Gastrocnemius medialis (tissue), 4 donors: ENCODE measurements at regions of chr4 and their contacts with region 1.

Region 1: GRCh38 chr4:71553605-71554004 is 214.8 kb downstream of the SLC4A4 start:
- DNase-seq: no peak
- ATAC-seq: peak; percentile 82
- H3K4me3 ChIP-seq: no peak overlapping the region
- H3K27ac ChIP-seq: no peak overlapping the region
- H3K4me1 ChIP-seq: no peaks in the 10 kb centered on the region
- H3K27me3 ChIP-seq: no peaks in the 10 kb centered on the region
- CTCF ChIP-seq: peak in 4 of 5 experiments; percentile 42 to 54 (median 52)
- POLR2A ChIP-seq: no peak

Region 2: DNA sequence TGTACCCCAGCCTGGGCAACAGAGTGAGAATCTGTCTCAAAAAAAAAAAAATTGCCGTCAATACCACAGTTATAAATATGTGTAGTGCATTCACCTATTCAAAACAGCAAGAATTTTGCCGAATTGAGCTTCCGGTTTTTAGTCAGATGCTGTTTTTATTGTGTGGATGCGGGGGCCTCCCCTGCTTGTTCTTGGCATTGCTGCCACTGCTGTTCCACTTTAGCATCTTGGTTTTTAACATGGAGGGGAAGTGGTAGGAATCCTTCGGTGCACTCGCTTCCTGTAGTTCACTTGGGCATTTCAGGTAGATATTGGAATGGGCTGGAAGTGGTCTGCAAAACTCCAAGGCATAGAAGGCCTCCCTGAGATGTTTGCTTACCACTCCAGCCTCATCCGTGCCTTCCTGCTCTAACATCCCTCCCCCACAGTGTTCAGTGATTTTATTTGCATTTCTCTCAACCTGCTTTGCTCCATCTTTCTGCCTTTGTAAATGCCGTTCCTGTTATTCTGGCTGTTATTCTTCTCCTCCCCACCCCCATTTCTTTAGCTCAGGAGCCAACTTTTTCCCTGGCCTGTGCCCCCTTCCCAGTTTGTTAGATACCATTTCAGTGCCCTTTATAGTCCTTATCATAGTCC is 626.0 kb before region 1 on chr4:
- in situ Hi-C with region 1: no loop called
- intact Hi-C with region 1: no loop called
- DNase-seq: no peak
- ATAC-seq: no peak
- H3K4me3 ChIP-seq: no peak overlapping the region
- H3K27ac ChIP-seq: no peak overlapping the region
- H3K4me1 ChIP-seq: no peaks in the 10 kb centered on the region
- H3K27me3 ChIP-seq: no peaks in the 10 kb centered on the region
- CTCF ChIP-seq: no peak
- POLR2A ChIP-seq: no peak

Region 3: GRCh38 chr4:71209161-71209560 is 344.4 kb before region 1 on chr4:
- in situ Hi-C with region 1: loop called in 1 of 4 experiments (anchors 25 kb)
- intact Hi-C with region 1: no loop called
- DNase-seq: no peak
- ATAC-seq: peak in 1 of 2 donors; percentile 70
- H3K4me3 ChIP-seq: no peak overlapping the region
- H3K27ac ChIP-seq: no peak overlapping the region
- H3K4me1 ChIP-seq: peaks cover 0 to 7% of the 10 kb centered on the region in 2 donors
- H3K27me3 ChIP-seq: no peaks in the 10 kb centered on the region
- CTCF ChIP-seq: no peak
- POLR2A ChIP-seq: no peak

Region 4: GRCh38 chr4:71229477-71230270 is 323.9 kb before region 1 on chr4:
- in situ Hi-C with region 1: loop called in 1 of 4 experiments (anchors 25 kb)
- intact Hi-C with region 1: loop called (anchors 2 kb)
- DNase-seq: no peak
- ATAC-seq: peak; percentile 48 to 76
- H3K4me3 ChIP-seq: peak overlapping the region in 1 of 4 donors; percentile 28
- H3K27ac ChIP-seq: peak overlapping the region in 2 of 4 donors; percentile 72 to 76
- H3K4me1 ChIP-seq: peaks cover 21 to 29% of the 10 kb centered on the region in 2 donors
- H3K27me3 ChIP-seq: no peaks in the 10 kb centered on the region
- CTCF ChIP-seq: peak; percentile 44 to 76 (median 56)
- POLR2A ChIP-seq: no peak

Region 5: GRCh38 chr4:71584585-71584984 is 31.0 kb after region 1 on chr4:
- in situ Hi-C with region 1: no loop called
- intact Hi-C with region 1: no loop called
- DNase-seq: no peak
- ATAC-seq: no peak
- H3K4me3 ChIP-seq: no peak overlapping the region
- H3K27ac ChIP-seq: no peak overlapping the region
- H3K4me1 ChIP-seq: no peaks in the 10 kb centered on the region
- H3K27me3 ChIP-seq: no peaks in the 10 kb centered on the region
- CTCF ChIP-seq: no peak
- POLR2A ChIP-seq: no peak

Region 6: GRCh38 chr4:71746379-71746778 is 192.8 kb after region 1 on chr4:
- in situ Hi-C with region 1: no loop called
- intact Hi-C with region 1: no loop called
- DNase-seq: no peak
- ATAC-seq: no peak
- H3K4me3 ChIP-seq: no peak overlapping the region
- H3K27ac ChIP-seq: no peak overlapping the region
- H3K4me1 ChIP-seq: no peaks in the 10 kb centered on the region
- H3K27me3 ChIP-seq: no peaks in the 10 kb centered on the region
- CTCF ChIP-seq: no peak
- POLR2A ChIP-seq: no peak